Endothelial cell of umbilical vein (primary cell): ENCODE measurements at regions of chr1 and their contacts with region 1.

Region 1: GRCh38 chr1:117121776-117122697 is 488 bp upstream of the TRIM45 start:
- DNase-seq: peak; percentile 98
- H3K4me3 ChIP-seq: peak overlapping the region; percentile 48 to 86 (median 74)
- H3K27ac ChIP-seq: peak overlapping the region; percentile 90
- H3K4me1 ChIP-seq: peaks cover 10% of the 10 kb centered on the region
- H3K27me3 ChIP-seq: peaks cover 11 to 25% of the 10 kb centered on the region in 2 experiments
- CTCF ChIP-seq: peak; percentile 88 to 91
- POLR2A ChIP-seq: no peak

Region 2: DNA sequence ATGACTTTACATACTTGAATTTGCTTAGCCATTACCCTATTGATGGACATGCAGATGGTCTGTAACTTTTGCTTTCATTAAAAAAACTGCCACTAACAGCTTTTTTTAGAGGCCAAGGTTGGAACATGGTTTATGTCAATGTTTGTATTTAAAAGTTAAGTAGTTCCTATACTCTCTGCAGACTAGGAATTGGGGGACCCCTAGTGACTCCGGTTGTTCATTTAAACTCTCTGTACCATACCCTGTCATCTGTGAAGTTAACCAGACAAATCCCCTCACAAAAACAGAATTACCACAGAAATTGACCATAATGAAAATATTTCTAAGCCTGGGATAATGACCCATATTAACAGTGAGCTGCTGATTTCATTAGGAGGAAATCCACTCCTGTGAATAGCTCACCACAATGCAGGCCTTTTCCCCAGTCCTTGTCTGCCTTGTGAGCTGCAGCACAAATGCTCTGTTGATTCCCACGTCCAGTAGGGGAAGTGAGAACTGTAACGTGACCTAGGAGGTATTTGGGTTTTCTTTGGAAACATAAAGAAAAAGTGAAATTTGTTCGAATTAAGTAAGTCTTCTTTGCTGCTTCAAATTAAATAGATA is 150.7 kb before region 1 on chr1:
- CTCF ChIA-PET with region 1: no interaction called
- POLR2A ChIA-PET with region 1: no interaction called
- dilution Hi-C with region 1: no loop called
- intact Hi-C with region 1: no loop called
- DNase-seq: no peak
- H3K4me3 ChIP-seq: no peak overlapping the region
- H3K27ac ChIP-seq: no peak overlapping the region
- H3K4me1 ChIP-seq: no peaks in the 10 kb centered on the region
- H3K27me3 ChIP-seq: no peaks in the 10 kb centered on the region
- CTCF ChIP-seq: no peak
- POLR2A ChIP-seq: no peak

Region 3: DNA sequence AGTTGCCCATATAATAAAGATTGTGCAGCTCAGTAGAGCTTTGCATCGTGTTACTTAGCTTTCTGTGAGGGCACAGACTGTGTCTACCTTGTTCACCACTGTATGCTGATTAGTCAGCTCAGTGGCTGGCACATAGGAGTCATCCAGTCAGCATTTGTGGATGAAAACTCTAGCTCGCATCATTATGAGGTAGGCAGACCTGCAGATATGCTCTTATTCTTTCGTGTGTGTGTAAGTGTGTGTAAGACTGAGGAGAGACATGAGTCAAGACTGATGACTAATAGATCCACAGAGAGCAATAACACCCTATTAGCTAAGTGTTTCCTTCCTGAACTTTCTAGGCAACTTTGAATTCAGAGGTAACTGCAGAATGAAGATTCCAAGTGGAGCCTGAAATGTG is 44.8 kb before region 1 on chr1:
- CTCF ChIA-PET with region 1: interaction called, 490 read pairs
- POLR2A ChIA-PET with region 1: no interaction called
- dilution Hi-C with region 1: no loop called
- intact Hi-C with region 1: loop called (anchors 1 kb)
- DNase-seq: peak; percentile 90
- H3K4me3 ChIP-seq: no peak overlapping the region
- H3K27ac ChIP-seq: peak overlapping the region; percentile 36
- H3K4me1 ChIP-seq: peaks cover 13% of the 10 kb centered on the region
- H3K27me3 ChIP-seq: no peaks in the 10 kb centered on the region
- CTCF ChIP-seq: no peak
- POLR2A ChIP-seq: no peak